ENCODE measurements at regions of chr11 and their contacts with region 1.

Region 1: DNA sequence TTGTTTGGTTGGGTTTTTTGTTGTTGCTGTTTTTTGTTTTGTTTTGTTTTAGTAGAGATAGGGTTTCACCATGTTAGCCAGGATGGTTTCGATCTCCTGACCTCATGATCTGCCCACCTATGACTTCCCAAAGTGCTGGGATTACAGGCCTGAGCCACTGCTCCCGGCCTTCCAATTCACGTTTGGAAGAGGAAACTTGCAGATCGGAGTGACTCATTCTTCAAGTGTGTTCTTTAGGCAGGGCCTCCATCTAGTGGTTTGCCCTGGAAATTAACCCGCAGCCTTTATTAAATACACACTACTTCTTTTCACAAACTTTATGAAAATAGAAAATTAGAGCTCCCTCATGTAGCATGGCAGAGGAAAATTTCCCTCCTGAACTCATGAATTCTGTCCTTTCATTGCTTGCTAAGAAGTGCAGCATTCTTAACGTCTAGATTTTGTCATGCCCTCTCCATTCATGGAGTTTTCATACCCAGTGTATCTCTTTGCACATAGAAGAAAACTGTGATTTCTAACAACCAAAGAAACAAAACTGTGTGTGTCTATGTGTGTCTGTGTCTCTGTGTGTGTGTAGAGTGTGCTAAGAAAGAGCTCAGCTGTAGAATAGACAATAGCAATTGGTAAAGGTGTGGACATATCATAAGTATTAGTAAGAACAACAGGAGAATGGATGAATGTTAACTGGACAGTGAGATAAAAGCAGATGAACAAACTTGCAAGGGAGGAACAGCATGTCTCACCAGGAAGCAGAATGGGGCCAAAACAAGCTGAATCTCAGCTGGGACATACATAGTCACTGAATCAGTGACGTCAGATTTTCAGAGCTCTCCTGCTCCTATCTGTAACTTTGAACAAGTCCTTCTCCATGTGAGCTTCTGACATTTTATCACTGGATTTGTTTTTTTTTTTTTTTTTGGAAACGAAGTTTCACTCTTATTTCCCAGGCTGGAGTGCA is 118.4 kb downstream of the BBOX1 start:
- DNase-seq: peak in 1 of 2 donors; percentile 30
- ATAC-seq: peak; percentile 93

Region 2: GRCh38 chr11:26297189-26297975 is 861.6 kb before region 1 on chr11:
- intact Hi-C with region 1: loop called in 1 of 2 experiments (anchors 10 kb)
- DNase-seq: no peak
- ATAC-seq: peak; percentile 67

Region 3: DNA sequence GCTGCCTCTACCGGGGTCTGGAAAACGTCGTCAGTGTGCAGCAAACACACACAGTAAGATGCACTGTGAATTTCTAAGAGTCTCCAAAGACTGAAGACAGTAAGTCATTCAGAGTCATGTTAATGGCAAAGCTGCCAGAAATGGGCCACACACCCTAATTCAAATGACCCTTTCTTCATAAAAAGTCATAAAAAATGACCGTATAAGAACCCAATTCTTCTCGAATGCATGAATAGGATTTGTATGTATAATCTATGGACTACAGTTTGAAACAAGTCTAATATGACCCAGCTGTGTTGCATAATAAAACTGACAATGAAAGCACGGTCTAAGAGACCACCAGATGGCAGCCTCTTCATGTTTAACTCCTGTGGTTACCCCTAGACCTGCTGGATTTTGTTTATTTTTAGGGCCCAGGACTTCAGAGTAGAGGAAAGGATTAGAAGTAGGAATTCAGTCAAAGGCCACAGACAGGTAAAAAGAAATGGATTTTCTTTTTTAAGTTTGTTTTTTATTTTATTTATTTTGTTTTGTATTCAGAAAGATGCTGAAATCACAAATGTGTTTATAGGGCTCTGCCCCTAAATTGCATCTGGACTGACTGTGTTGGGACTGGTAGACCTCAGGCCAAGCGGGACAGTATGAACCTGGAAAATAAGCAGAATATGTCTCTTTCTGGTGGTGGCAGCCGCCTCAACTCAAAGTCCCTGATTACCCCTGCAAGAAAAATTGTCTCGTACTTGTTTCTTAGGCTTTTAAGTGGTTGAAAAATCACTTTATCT is 405.1 kb before region 1 on chr11:
- intact Hi-C with region 1: loop called in 1 of 2 experiments (anchors 2 kb)
- DNase-seq: peak in 1 of 2 donors; percentile 56
- ATAC-seq: peak; percentile 85

Measured in left colon (tissue), 2 donors.